ENCODE measurements at regions of chr11 and their contacts with region 1.

Region 1: GRCh38 chr11:96188243-96189006 is 154.6 kb downstream of the MAML2 start:
- DNase-seq: no peak
- H3K4me3 Mint-ChIP-seq: peak overlapping the region; percentile 4
- H3K27ac Mint-ChIP-seq: peak overlapping the region; percentile 74
- H3K4me1 Mint-ChIP-seq: peaks cover 45% of the 10 kb centered on the region
- H3K27me3 Mint-ChIP-seq: no peaks in the 10 kb centered on the region

Region 2: DNA sequence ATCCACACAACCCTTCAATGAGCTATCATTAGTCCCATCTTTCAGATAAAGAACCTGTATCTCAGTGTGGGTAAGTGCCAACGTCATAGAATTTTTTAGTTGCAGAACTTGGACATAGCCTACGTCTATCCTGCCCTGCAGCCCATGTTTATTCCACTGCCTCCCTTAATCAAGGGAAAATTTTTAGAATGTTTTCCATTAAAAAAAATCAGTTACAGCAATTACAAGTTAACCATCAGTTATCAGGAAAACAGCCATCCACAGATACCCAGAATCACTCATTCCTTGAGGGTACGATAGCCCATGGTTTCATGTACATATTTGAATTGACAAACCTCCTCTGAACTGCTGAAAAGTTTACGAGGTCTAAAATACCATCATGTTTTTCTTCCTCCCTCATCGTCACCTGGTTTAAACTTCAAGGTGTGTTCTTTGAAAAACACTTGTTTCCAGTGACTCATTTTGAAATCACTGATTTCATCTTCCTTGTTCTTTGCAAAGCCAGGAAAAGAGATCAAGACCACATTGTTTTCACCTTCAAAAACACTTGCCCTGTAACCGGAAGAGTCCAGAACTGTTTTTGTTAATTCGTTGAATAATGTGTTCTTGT is 499.7 kb before region 1 on chr11:
- intact Hi-C with region 1: loop called (anchors 1 kb)
- DNase-seq: peak; percentile 34
- H3K4me3 Mint-ChIP-seq: no peak overlapping the region
- H3K27ac Mint-ChIP-seq: no peak overlapping the region
- H3K4me1 Mint-ChIP-seq: peaks cover 26% of the 10 kb centered on the region
- H3K27me3 Mint-ChIP-seq: no peaks in the 10 kb centered on the region

Region 3: DNA sequence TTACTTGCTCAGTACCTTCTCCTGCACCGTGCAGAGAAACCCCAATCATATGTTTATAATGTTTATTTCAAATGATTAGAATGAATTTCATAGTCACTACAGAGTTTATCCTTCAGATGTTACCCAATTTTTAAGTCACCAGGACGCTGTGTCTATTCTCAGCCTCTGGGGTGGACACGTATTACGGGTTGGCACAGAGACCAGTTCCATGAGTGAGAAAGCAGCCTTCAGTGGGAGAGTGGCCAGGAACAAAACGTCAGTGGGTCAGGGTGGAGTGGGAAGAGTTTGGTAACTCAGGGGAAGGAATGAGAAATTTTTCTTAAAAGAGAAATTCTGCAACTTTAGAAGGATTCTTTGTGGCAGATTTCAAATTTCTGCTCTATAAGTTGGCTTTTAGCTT is 187.4 kb before region 1 on chr11:
- intact Hi-C with region 1: no loop called
- DNase-seq: no peak
- H3K4me3 Mint-ChIP-seq: no peak overlapping the region
- H3K27ac Mint-ChIP-seq: no peak overlapping the region
- H3K4me1 Mint-ChIP-seq: peaks cover 10% of the 10 kb centered on the region
- H3K27me3 Mint-ChIP-seq: no peaks in the 10 kb centered on the region

Region 4: DNA sequence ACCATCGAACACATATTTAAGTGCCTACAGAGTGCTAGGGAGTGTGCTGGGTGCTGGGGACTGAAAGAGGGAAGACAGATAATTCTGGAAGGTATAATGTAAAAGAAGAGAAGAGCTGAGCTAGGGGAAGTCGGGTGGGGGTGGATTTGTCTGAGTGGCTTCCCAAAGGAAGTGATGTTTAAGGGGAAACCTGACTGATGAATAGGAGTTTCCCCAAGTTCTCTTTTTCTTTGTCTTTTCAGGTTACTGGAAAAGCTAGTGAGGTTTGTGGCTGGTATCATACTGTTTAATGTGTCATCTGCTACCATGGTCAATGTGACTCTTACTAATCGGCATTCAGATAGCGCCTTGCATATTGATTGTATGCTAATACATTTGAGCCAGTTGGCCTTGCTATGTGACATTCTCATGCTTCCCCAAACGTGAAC is 112.9 kb before region 1 on chr11:
- intact Hi-C with region 1: loop called (anchors 2 kb)
- DNase-seq: no peak
- H3K4me3 Mint-ChIP-seq: peak overlapping the region; percentile 15
- H3K27ac Mint-ChIP-seq: peak overlapping the region; percentile 78
- H3K4me1 Mint-ChIP-seq: peaks cover 35% of the 10 kb centered on the region
- H3K27me3 Mint-ChIP-seq: no peaks in the 10 kb centered on the region

Region 5: DNA sequence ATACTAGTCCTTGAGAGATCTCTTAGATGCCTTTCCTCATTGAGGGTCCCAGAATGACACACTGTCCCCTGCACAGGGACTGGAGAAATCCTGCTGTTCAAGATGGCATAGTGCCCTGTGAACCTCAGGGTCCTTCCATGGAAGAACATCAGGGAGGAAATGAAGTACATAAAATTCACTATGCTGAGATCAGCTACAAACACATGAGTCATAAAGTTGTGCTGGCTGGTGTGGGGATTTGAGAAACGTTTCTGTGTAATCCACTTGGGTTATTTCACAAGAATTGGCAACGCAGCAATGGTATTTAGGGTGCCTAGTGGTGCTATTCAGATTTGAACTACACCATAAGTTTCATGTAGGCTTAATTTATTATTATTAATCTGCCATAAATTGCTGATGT is 19.8 kb before region 1 on chr11:
- intact Hi-C with region 1: loop called (anchors 2 kb)
- DNase-seq: no peak
- H3K4me3 Mint-ChIP-seq: no peak overlapping the region
- H3K27ac Mint-ChIP-seq: no peak overlapping the region
- H3K4me1 Mint-ChIP-seq: peaks cover 42% of the 10 kb centered on the region
- H3K27me3 Mint-ChIP-seq: no peaks in the 10 kb centered on the region

Region 6: GRCh38 chr11:96235751-96236150 is 47.3 kb after region 1 on chr11:
- intact Hi-C with region 1: loop called (anchors 1 kb)
- DNase-seq: peak; percentile 56
- H3K4me3 Mint-ChIP-seq: peak overlapping the region; percentile 74
- H3K27ac Mint-ChIP-seq: peak overlapping the region; percentile 93
- H3K4me1 Mint-ChIP-seq: peaks cover 13% of the 10 kb centered on the region
- H3K27me3 Mint-ChIP-seq: no peaks in the 10 kb centered on the region

Region 7: GRCh38 chr11:96267496-96268032 is 79.1 kb after region 1 on chr11:
- intact Hi-C with region 1: loop called (anchors 1 kb)
- DNase-seq: no peak
- H3K4me3 Mint-ChIP-seq: peak overlapping the region; percentile 43
- H3K27ac Mint-ChIP-seq: peak overlapping the region; percentile 57
- H3K4me1 Mint-ChIP-seq: peaks cover 78% of the 10 kb centered on the region
- H3K27me3 Mint-ChIP-seq: no peaks in the 10 kb centered on the region